ENCODE measurements at regions of chr19 and their contacts with region 1.

Region 1: DNA sequence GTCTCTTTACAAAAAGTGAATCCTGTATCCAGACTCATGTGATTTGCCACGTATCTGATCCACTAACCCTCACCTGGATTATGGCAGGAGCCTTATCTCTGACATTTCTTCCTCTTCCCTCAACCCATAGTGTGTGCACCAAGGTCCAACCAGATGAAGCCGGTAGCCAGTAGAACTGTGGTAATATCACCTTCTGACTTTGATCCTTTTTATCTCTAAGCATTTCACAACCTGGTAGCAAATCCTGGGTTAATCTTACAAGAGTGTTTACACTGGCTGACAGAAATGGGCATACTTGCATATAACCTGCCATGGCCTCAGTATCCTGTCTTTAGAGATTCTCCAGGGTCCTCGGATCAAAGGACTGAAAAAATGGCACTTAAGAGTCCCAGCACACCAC is 1.9 kb downstream of the ZNF417 start:
- DNase-seq: no peak
- ATAC-seq: no peak
- H3K4me3 ChIP-seq: no peak overlapping the region
- H3K27ac ChIP-seq: no peak overlapping the region
- H3K4me1 ChIP-seq: peaks cover 9% of the 10 kb centered on the region
- H3K27me3 ChIP-seq: no peaks in the 10 kb centered on the region
- CTCF ChIP-seq: no peak

Region 2: DNA sequence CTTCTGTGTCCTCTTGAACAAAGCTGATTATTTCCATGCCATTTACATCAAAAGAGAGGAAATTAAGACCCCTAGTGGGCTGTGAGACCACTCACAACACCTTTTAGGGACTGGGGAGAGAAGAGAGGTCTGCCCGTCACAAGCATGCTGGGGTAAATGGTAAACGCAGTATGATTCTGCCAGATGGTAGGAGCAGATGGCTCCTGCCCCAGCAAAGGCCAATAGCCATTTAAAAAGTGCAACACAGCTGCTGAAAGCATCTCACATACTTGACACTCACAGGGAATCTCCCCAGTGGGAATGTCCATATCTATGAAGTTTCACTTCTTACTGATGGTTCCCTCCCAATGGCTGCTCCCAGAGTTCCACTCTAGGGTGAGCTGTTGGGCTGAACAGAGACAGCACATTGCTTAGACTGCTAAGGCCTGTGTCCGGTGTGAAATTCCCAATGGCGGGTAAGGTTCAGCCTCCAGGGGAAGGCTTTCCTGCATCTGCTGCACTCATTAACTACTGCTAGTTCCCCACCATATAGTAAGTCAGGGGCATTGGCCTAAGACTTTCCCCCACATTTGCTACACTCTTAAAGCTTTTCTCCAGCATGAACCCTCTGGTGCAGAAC is 194.5 kb before region 1 on chr19:
- intact Hi-C with region 1: loop called in 1 of 2 experiments (anchors 10 kb)
- DNase-seq: no peak
- ATAC-seq: no peak
- H3K4me3 ChIP-seq: no peak overlapping the region
- H3K27ac ChIP-seq: no peak overlapping the region
- H3K4me1 ChIP-seq: no peaks in the 10 kb centered on the region
- H3K27me3 ChIP-seq: no peaks in the 10 kb centered on the region
- CTCF ChIP-seq: no peak

Region 3: DNA sequence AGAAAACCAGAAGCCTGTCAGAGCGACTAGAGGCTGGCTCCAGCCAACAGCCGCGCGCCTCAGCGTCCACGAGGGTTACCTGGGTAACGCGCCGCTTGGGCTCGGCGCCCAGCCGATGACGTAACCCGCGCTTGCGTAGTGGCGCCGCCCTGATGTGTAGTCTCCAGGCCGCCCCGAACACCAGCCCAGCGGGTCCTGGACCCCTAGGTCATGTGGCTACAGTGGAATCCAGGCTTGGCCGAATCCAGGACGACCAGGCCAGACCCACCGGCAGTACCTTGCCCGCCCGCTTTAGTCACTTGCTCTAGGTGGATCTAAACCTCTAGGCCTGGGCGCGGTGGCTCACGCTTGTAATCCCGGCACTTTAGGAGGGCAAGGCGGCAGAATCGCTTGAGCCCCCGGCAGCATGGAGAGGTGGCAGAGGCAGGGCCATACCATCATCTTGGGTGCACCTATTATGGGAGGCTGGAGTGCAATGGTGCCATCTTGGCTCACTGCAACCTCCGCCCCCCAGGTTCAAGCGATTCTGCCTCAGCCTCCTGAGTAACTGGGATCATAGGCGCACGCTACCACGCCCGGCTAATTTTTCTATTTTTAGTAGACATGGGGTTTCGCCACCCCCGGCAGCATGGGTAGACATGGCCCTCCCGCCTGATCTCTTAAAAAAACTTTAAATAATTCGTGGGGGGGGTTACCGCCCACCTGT is 95.3 kb after region 1 on chr19:
- intact Hi-C with region 1: no loop called
- DNase-seq: peak; percentile 76 to 77
- ATAC-seq: peak; percentile 68 to 85 (median 78)
- H3K4me3 ChIP-seq: peak overlapping the region; percentile 44
- H3K27ac ChIP-seq: no peak overlapping the region
- H3K4me1 ChIP-seq: no peaks in the 10 kb centered on the region
- H3K27me3 ChIP-seq: peaks cover 0 to 17% (median 0%) of the 10 kb centered on the region in 3 donors
- CTCF ChIP-seq: no peak

Region 4: DNA sequence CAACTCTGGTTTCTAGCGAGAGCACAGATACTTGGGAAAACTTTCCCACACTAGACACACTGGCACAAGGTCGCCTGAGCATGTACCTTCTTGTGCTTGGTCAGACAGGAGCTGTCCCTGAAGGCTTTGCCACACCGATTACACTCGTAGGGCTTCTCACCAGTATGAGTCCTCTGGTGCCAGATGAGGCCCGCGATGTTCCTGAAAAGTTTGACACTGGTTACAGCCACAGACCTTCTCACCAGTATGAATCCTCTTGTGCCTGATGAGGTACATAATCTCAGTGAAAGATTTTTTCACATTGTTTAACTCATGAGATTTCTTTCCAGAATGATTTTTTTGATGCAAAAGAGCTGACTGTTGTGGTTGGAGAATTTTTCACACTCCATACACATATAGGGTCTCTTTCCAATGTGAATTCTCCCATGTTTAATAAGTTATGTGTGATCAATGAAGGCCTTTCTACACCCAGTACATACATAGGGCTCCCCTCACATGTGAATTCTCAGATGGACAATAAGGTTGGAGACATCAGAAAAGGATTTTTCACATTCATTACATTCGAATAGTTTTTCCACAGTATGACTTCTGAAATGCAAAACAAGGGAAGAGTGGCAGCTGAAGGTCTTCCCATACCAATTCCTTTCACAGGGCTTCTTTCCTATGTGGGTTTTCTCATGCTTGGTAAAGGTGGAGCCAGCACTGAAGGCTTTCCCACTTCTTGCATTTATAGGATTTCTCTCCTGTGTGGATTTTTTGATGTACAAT is 193.4 kb after region 1 on chr19:
- intact Hi-C with region 1: no loop called
- DNase-seq: no peak
- ATAC-seq: no peak
- H3K4me3 ChIP-seq: no peak overlapping the region
- H3K27ac ChIP-seq: no peak overlapping the region
- H3K4me1 ChIP-seq: no peaks in the 10 kb centered on the region
- H3K27me3 ChIP-seq: no peaks in the 10 kb centered on the region
- CTCF ChIP-seq: no peak